B cell (primary cell): ENCODE measurements at regions of chr22 and their contacts with region 1.

Region 1: DNA sequence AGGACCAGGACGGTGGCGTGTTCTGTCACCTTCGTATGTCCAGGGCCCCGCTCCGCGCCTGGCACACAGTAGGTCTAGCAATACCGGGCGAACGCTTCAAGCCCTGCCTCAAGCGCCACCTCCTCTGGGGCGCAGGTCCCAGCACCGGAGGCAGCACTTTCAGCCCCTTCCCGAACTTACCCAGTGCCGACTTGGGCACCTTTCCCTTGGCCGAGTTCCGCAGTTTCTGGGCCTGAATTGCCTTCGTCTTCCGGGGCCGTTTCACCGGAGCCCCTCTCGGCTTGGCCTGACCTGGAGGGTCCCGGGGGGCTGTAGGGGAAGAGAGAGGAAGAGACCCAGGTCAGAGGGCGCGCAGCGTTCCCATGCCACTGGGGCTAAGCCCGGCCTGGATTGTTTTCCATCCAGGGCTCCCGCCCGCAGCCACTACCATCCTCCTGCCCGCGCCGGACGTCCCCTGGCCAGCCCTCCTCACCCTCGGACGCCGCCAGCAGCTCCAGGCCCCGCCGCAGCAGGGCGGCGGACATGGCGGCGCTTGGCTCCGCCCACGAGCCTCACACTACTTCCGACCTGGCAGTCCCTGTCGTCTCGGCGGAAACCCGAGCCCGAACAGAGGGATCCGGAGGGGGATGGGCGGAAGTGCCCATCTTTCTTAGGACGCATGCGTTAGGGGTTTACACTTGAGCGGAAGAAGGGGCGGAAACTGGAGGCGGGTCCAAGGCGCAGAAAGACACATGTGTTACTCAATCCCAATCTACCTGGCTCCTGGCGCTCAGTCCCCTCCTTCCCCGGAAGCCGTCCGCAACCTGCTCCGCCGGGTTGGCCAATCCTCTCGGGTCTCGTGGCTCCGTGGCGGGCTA is at the start of gene RPS19BP1:
- DNase-seq: peak; percentile 100
- ATAC-seq: peak; percentile 83
- H3K4me3 ChIP-seq: peak within 1 kb of the TSS; percentile 70 to 96 (median 89)
- H3K4me3 Mint-ChIP-seq: peak within 1 kb of the TSS; percentile 91
- H3K27ac ChIP-seq: peak within 1 kb of the TSS; percentile 56 to 94
- H3K27ac Mint-ChIP-seq: peak within 1 kb of the TSS; percentile 94
- H3K4me1 ChIP-seq: peaks cover 45 to 58% of the 10 kb centered on the region in 2 donors
- H3K4me1 Mint-ChIP-seq: peaks cover 54% of the 10 kb centered on the region
- H3K27me3 ChIP-seq: peaks cover 0 to 5% (median 0%) of the 10 kb centered on the region in 4 experiments
- H3K27me3 Mint-ChIP-seq: no peaks in the 10 kb centered on the region
- CTCF ChIP-seq: no peak
- total RNA-seq, gene RPS19BP1: 59.1 and 60.3 TPM in 2 replicates

Region 2: GRCh38 chr22:39343259-39344048 is 189.0 kb before region 1 on chr22:
- CTCF ChIA-PET with region 1: interaction called, 26 read pairs
- POLR2A ChIA-PET with region 1: no interaction called
- intact Hi-C with region 1: loop called (anchors 1 kb)
- DNase-seq: peak; percentile 76
- ATAC-seq: peak; percentile 90
- H3K4me3 ChIP-seq: no peak overlapping the region
- H3K4me3 Mint-ChIP-seq: no peak overlapping the region
- H3K27ac ChIP-seq: no peak overlapping the region
- H3K27ac Mint-ChIP-seq: no peak overlapping the region
- H3K4me1 ChIP-seq: peaks cover 6 to 8% of the 10 kb centered on the region in 2 donors
- H3K4me1 Mint-ChIP-seq: peaks cover 4% of the 10 kb centered on the region
- H3K27me3 ChIP-seq: peaks cover 0 to 10% (median 0%) of the 10 kb centered on the region in 4 experiments
- H3K27me3 Mint-ChIP-seq: peaks cover 10% of the 10 kb centered on the region
- CTCF ChIP-seq: peak; percentile 85

Region 3: GRCh38 chr22:39368461-39368911 is 164.0 kb before region 1 on chr22:
- CTCF ChIA-PET with region 1: no interaction called
- POLR2A ChIA-PET with region 1: no interaction called
- intact Hi-C with region 1: no loop called
- DNase-seq: no peak
- ATAC-seq: peak; percentile 21
- H3K4me3 ChIP-seq: no peak overlapping the region
- H3K4me3 Mint-ChIP-seq: no peak overlapping the region
- H3K27ac ChIP-seq: peak overlapping the region in 1 of 2 donors; percentile 5
- H3K27ac Mint-ChIP-seq: no peak overlapping the region
- H3K4me1 ChIP-seq: peaks cover 17 to 25% of the 10 kb centered on the region in 2 donors
- H3K4me1 Mint-ChIP-seq: peaks cover 46% of the 10 kb centered on the region
- H3K27me3 ChIP-seq: no peaks in the 10 kb centered on the region
- H3K27me3 Mint-ChIP-seq: no peaks in the 10 kb centered on the region
- CTCF ChIP-seq: no peak

Region 4: DNA sequence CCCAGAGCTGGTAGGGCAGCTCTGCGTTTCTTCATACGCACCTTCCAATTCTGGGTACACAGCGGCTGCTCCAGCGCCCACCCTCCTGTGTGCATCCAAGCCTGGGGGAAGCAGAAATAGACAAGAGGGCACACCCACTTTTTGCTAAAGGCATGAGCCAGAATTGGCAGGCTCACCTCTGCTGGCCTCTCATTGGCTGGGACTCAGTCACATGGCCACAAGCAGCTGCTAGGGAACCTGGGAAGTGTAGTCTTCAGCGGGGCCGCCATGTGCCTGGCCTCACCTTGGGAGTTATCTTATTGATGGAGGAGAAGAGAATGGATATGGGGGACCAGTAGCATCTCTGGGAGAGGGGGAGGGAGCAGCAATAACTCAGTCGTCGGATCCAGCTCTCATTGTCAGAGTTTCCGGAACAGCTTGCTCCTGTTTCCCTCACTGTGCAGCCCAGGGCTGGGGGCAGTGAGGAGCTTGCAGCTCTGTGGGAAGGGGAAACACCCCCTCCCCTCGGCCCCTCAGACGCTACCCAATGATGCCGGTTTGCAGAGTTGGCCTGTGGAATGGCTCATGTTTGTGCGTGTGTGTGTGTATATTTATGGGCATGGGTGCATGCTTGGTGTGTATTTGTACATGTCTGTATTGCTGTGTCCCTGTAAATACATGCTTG is 42.2 kb before region 1 on chr22:
- CTCF ChIA-PET with region 1: interaction called, 166 read pairs
- POLR2A ChIA-PET with region 1: no interaction called
- intact Hi-C with region 1: loop called (anchors 1 kb)
- DNase-seq: peak; percentile 86
- ATAC-seq: peak; percentile 98
- H3K4me3 ChIP-seq: peak overlapping the region in 2 of 5 experiments; percentile 12 to 37
- H3K4me3 Mint-ChIP-seq: peak overlapping the region; percentile 59
- H3K27ac ChIP-seq: no peak overlapping the region
- H3K27ac Mint-ChIP-seq: peak overlapping the region; percentile 79
- H3K4me1 ChIP-seq: peaks cover 4 to 14% of the 10 kb centered on the region in 2 donors
- H3K4me1 Mint-ChIP-seq: peaks cover 21% of the 10 kb centered on the region
- H3K27me3 ChIP-seq: no peaks in the 10 kb centered on the region
- H3K27me3 Mint-ChIP-seq: no peaks in the 10 kb centered on the region
- CTCF ChIP-seq: no peak

Region 5: DNA sequence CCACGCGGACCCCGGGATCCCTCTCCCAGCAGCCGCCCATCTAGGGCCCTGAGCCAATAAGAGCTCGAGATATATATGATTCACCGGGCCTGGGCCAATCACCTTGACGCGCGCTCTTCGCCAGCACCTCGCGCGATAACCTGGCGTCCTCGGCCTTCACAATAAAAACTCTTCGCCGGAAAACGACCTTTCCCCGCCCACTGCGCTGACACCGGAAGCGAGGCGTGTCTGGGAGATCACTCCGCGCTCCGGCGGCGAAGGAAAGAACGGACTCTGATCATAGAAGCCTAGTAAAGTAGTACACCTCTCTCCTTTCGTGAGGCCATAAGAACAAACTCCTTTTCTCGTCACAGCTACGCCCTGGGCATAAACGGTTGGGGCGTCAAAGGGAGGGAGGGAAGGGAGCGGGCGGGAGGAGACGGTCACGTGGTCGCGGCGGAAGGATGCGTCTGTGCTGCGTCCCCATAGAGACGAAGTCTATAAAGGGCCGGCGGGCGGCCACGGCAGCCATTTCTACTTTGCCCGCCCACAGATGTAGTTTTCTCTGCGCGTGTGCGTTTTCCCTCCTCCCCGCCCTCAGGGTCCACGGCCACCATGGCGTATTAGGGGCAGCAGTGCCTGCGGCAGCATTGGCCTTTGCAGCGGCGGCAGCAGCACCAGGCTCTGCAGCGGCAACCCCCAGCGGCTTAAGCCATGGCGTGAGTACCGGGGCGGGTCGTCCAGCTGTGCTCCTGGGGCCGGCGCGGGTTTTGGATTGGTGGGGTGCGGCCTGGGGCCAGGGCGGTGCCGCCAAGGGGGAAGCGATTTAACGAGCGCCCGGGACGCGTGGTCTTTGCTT is 12.2 kb before region 1 on chr22 and contains the start of gene ATF4:
- CTCF ChIA-PET with region 1: interaction called, 85 read pairs
- POLR2A ChIA-PET with region 1: interaction called, 57 read pairs
- intact Hi-C with region 1: loop called (anchors 1 kb)
- DNase-seq: peak; percentile 100
- ATAC-seq: peak; percentile 89
- H3K4me3 ChIP-seq: peak within 1 kb of the TSS; percentile 82 to 100 (median 99)
- H3K4me3 Mint-ChIP-seq: peak within 1 kb of the TSS; percentile 94
- H3K27ac ChIP-seq: peak within 1 kb of the TSS; percentile 91 to 95
- H3K27ac Mint-ChIP-seq: peak within 1 kb of the TSS; percentile 98
- H3K4me1 ChIP-seq: peaks cover 31 to 49% of the 10 kb centered on the region in 2 donors
- H3K4me1 Mint-ChIP-seq: peaks cover 59% of the 10 kb centered on the region
- H3K27me3 ChIP-seq: no peaks in the 10 kb centered on the region
- H3K27me3 Mint-ChIP-seq: no peaks in the 10 kb centered on the region
- CTCF ChIP-seq: no peak
- total RNA-seq, gene ATF4: 236 and 244 TPM in 2 replicates

Region 6: GRCh38 chr22:39690881-39691605 is 158.6 kb after region 1 on chr22:
- CTCF ChIA-PET with region 1: no interaction called
- POLR2A ChIA-PET with region 1: no interaction called
- intact Hi-C with region 1: no loop called
- DNase-seq: no peak
- ATAC-seq: no peak
- H3K4me3 ChIP-seq: peak overlapping the region in 1 of 5 experiments; percentile 11
- H3K4me3 Mint-ChIP-seq: peak overlapping the region; percentile 5
- H3K27ac ChIP-seq: no peak overlapping the region
- H3K27ac Mint-ChIP-seq: no peak overlapping the region
- H3K4me1 ChIP-seq: peaks cover 6% of the 10 kb centered on the region in 2 donors
- H3K4me1 Mint-ChIP-seq: peaks cover 5% of the 10 kb centered on the region
- H3K27me3 ChIP-seq: peaks cover 0 to 58% (median 8%) of the 10 kb centered on the region in 4 experiments
- H3K27me3 Mint-ChIP-seq: peaks cover 51% of the 10 kb centered on the region
- CTCF ChIP-seq: no peak

Region 7: GRCh38 chr22:40036591-40037225 is 504.3 kb after region 1 on chr22:
- CTCF ChIA-PET with region 1: interaction called, 73 read pairs
- POLR2A ChIA-PET with region 1: interaction called, 4 read pairs
- intact Hi-C with region 1: loop called (anchors 1 kb)
- DNase-seq: peak; percentile 73
- ATAC-seq: peak; percentile 88
- H3K4me3 ChIP-seq: no peak overlapping the region
- H3K4me3 Mint-ChIP-seq: no peak overlapping the region
- H3K27ac ChIP-seq: no peak overlapping the region
- H3K27ac Mint-ChIP-seq: no peak overlapping the region
- H3K4me1 ChIP-seq: peaks cover 0 to 5% of the 10 kb centered on the region in 2 donors
- H3K4me1 Mint-ChIP-seq: peaks cover 2% of the 10 kb centered on the region
- H3K27me3 ChIP-seq: peaks cover 0 to 43% (median 10%) of the 10 kb centered on the region in 4 experiments
- H3K27me3 Mint-ChIP-seq: peaks cover 26% of the 10 kb centered on the region
- CTCF ChIP-seq: peak; percentile 78

Region 8: GRCh38 chr22:40636380-40637182 is 1104.1 kb after region 1 on chr22 and contains the start of gene MRTFA:
- CTCF ChIA-PET with region 1: no interaction called
- POLR2A ChIA-PET with region 1: no interaction called
- intact Hi-C with region 1: loop called (anchors 2 kb)
- DNase-seq: peak; percentile 99
- ATAC-seq: peak; percentile 90
- H3K4me3 ChIP-seq: peak within 1 kb of the TSS; percentile 81 to 99 (median 96)
- H3K4me3 Mint-ChIP-seq: peak within 1 kb of the TSS; percentile 98
- H3K27ac ChIP-seq: peak within 1 kb of the TSS; percentile 84 to 92
- H3K27ac Mint-ChIP-seq: peak within 1 kb of the TSS; percentile 97
- H3K4me1 ChIP-seq: peaks cover 24 to 30% of the 10 kb centered on the region in 2 donors
- H3K4me1 Mint-ChIP-seq: peaks cover 39% of the 10 kb centered on the region
- H3K27me3 ChIP-seq: no peaks in the 10 kb centered on the region
- H3K27me3 Mint-ChIP-seq: no peaks in the 10 kb centered on the region
- CTCF ChIP-seq: no peak
- total RNA-seq, gene MRTFA: 82.6 and 87.6 TPM in 2 replicates